SK-N-SH (cell line): ENCODE measurements at regions of chr11 and their contacts with region 1.

Region 1: DNA sequence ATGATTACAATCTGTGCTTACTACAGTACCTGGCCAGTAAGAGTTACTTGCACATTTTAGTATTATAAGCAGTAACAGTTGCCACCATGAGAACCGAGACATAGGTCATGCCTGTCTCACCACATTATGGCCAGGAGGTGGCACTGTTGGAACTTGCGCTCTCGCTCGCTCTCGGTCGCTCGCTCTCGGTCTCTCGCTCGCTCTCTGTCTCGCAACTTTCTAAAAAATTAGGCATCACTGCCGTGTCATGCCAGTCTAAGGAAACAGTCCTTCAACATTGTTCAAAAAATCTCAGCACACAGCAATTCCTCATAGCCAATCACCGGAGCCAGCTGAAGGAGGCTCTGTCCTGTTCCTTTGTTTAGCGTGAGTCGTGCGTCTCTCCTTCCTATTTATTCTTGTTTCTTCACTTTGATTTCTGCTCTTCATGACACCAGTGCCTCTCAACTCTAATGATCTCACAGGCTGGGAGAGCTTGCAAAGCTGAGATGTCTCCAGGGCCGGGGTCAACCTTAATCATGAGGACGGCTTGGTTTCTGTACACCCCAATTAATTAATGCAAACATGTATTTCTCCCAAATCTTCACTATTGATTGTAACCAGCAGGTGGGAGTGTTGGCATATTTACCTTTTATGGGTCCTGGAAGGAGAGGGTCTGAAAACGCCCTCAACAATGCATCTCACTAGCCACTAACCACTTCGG is 6.3 kb upstream of the ADAMTS8 start:
- DNase-seq: peak; percentile 78
- H3K4me3 ChIP-seq: peak overlapping the region; percentile 70 to 76
- H3K27ac ChIP-seq: peak overlapping the region; percentile 3 to 68; a peak in 2 of 4 replicates
- H3K4me1 ChIP-seq: peaks cover 0 to 6% of the 10 kb centered on the region in 2 experiments; a peak in 2 of 4 replicates
- H3K27me3 ChIP-seq: peaks cover 9% of the 10 kb centered on the region
- CTCF ChIP-seq: peak; percentile 76
- EP300 ChIP-seq: no peak
- RAD21 ChIP-seq: peak; percentile 91

Region 2: GRCh38 chr11:130213143-130213978 is 221.3 kb before region 1 on chr11:
- CTCF ChIA-PET with region 1: interaction called, 24 read pairs
- POLR2A ChIA-PET with region 1: no interaction called
- DNase-seq: peak; percentile 94
- H3K4me3 ChIP-seq: peak overlapping the region; percentile 9 to 30; a peak in 2 of 4 replicates
- H3K27ac ChIP-seq: no peak overlapping the region
- H3K4me1 ChIP-seq: peaks cover 0 to 7% of the 10 kb centered on the region in 2 experiments; a peak in 1 of 4 replicates
- H3K27me3 ChIP-seq: peaks cover 20% of the 10 kb centered on the region
- CTCF ChIP-seq: peak; percentile 94
- EP300 ChIP-seq: no peak
- RAD21 ChIP-seq: peak; percentile 87

Region 3: DNA sequence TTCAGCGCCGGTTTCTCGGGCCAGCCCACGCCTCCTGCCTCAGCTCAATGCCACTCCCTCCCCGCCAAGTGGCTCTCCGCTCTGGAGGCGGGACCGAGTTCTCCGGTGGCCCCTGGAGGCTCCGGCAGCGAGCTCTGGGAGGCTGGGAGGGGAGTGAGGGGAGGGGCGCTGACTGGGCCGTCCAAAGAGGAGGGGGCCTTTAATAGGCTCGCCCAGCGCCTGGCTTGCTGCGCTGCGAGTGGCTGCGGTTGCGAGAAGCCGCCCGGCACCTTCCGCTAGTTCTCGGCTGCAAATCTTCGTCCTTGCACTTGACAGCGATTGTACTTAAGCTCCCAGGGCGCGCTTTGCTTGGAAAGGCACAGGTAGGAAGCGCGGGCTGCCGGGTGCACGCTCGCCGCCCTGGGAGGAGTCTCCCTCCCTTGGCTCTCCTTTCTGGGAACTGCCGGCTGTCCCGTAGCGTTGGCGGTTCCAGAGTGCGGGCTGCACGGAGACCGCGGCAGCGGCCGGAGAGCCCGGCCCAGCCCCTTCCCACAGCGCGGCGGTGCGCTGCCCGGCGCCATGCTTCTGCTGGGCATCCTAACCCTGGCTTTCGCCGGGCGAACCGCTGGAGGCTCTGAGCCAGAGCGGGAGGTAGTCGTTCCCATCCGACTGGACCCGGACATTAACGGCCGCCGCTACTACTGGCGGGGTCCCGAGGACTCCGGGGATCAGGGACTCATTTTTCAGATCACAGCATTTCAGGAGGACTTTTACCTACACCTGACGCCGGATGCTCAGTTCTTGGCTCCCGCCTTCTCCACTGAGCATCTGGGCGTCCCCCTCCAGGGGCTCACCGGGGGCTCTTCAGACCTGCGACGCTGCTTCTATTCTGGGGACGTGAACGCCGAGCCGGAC is 14.0 kb after region 1 on chr11 and contains the start of gene ADAMTS15:
- CTCF ChIA-PET with region 1: interaction called, 34 read pairs
- POLR2A ChIA-PET with region 1: no interaction called
- DNase-seq: peak; percentile 81
- H3K4me3 ChIP-seq: peak within 1 kb of the TSS; percentile 59 to 83
- H3K27ac ChIP-seq: peak within 1 kb of the TSS in 1 of 2 experiments; percentile 41; a peak in 1 of 4 replicates
- H3K4me1 ChIP-seq: peaks cover 0 to 9% of the 10 kb centered on the region in 2 experiments; a peak in 2 of 4 replicates
- H3K27me3 ChIP-seq: no peaks in the 10 kb centered on the region
- CTCF ChIP-seq: no peak
- EP300 ChIP-seq: no peak
- RAD21 ChIP-seq: no peak
- polyA plus RNA-seq, gene ADAMTS15: 0.96 and 1.1 TPM in 2 replicates

Region 4: GRCh38 chr11:130839981-130840666 is 405.5 kb after region 1 on chr11:
- CTCF ChIA-PET with region 1: interaction called, 11 read pairs
- POLR2A ChIA-PET with region 1: no interaction called
- DNase-seq: no peak
- H3K4me3 ChIP-seq: no peak overlapping the region
- H3K27ac ChIP-seq: no peak overlapping the region
- H3K4me1 ChIP-seq: no peaks in the 10 kb centered on the region
- H3K27me3 ChIP-seq: no peaks in the 10 kb centered on the region
- CTCF ChIP-seq: no peak
- EP300 ChIP-seq: no peak
- RAD21 ChIP-seq: no peak

Region 5: GRCh38 chr11:130852589-130852988 is 417.9 kb after region 1 on chr11:
- CTCF ChIA-PET with region 1: interaction called, 747 read pairs
- POLR2A ChIA-PET with region 1: no interaction called
- DNase-seq: no peak
- H3K4me3 ChIP-seq: no peak overlapping the region
- H3K27ac ChIP-seq: no peak overlapping the region
- H3K4me1 ChIP-seq: peaks cover 0 to 16% of the 10 kb centered on the region in 2 experiments; a peak in 2 of 4 replicates
- H3K27me3 ChIP-seq: no peaks in the 10 kb centered on the region
- CTCF ChIP-seq: no peak
- EP300 ChIP-seq: no peak
- RAD21 ChIP-seq: no peak

Region 6: DNA sequence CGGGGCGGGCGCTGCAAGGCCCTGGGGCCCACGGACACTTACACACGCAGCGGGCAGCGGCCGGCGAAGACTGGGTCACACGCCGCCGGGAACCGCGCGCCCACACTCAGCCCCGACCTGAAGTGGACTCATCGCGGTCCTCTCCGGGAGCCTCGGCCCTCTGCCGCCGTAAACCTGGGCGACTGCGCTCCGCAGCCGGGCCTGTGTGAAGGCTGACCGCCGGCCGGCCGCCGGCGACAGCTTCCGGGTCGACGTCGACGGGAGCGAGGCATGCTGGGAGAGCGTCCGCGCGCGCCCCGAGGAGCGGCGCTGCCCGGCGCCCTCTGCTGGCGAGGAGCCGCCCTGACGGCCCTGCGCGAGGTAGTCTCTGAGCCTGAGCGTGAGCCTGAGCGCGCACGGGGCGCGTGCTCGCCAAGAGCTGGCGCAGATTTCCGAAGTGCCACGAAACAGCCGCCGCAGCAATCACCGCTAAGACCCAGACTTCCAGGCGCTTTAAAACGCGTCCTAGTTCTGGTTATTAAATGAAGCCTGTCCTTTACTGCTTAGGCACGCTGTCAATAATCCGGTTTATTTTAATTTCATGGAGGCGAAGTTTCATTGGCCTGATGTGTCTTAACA is 481.7 kb after region 1 on chr11 and contains the start of gene SNX19:
- CTCF ChIA-PET with region 1: interaction called, 11 read pairs
- POLR2A ChIA-PET with region 1: no interaction called
- DNase-seq: peak; percentile 97
- H3K4me3 ChIP-seq: peak within 1 kb of the TSS; percentile 90 to 96
- H3K27ac ChIP-seq: peak within 1 kb of the TSS; percentile 68 to 73; a peak in 3 of 4 replicates
- H3K4me1 ChIP-seq: peaks cover 9 to 18% of the 10 kb centered on the region in 2 experiments
- H3K27me3 ChIP-seq: no peaks in the 10 kb centered on the region
- CTCF ChIP-seq: peak; percentile 85
- EP300 ChIP-seq: peak in 1 of 2 experiments; percentile 29; a peak in 1 of 4 replicates
- RAD21 ChIP-seq: no peak
- polyA plus RNA-seq, gene SNX19: 16.6 and 21.9 TPM in 2 replicates